Activated CD4-positive, alpha-beta T cell treated with anti-CD3 and anti-CD28 coated beads for 36 hours (primary cell): ENCODE measurements at regions of chr1 and their contacts with region 1.

Region 1: GRCh38 chr1:85276215-85276977 is at the start of gene BCL10:
- DNase-seq: peak; percentile 99
- ATAC-seq: peak; percentile 97
- H3K4me3 Mint-ChIP-seq: peak within 1 kb of the TSS; percentile 84
- H3K27ac Mint-ChIP-seq: peak within 1 kb of the TSS; percentile 94
- H3K4me1 Mint-ChIP-seq: peaks cover 52% of the 10 kb centered on the region
- H3K27me3 Mint-ChIP-seq: peaks cover 4% of the 10 kb centered on the region
- total RNA-seq, gene BCL10: 28.3 to 28.8 TPM

Region 2: DNA sequence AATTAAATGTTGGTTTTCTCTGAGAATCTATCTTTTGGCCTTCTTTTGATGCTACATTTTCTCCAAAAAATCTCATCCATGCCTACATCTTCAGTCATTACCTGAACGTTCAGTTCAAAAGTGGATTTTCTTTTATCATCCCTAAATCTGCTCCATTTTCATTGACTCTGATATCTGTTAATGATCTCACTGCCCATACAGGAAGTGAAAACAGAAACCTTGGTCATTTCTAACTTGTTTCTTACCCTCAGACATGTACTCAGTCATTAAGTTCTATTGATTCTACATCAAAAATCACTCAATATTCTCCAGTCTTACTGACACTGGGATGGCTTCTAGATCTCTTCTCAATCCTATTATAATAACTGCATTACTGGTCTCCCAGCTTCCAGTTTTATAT is 1109.6 kb before region 1 on chr1:
- CTCF ChIA-PET with region 1: no interaction called
- POLR2A ChIA-PET with region 1: no interaction called
- intact Hi-C with region 1: loop called in 1 of 2 experiments (anchors 5 kb)
- DNase-seq: no peak
- ATAC-seq: peak; percentile 71
- H3K4me3 Mint-ChIP-seq: peak overlapping the region; percentile 4
- H3K27ac Mint-ChIP-seq: peak overlapping the region; percentile 52
- H3K4me1 Mint-ChIP-seq: peaks cover 83% of the 10 kb centered on the region
- H3K27me3 Mint-ChIP-seq: no peaks in the 10 kb centered on the region

Region 3: GRCh38 chr1:84959294-84959693 is 317.1 kb before region 1 on chr1:
- CTCF ChIA-PET with region 1: no interaction called
- POLR2A ChIA-PET with region 1: interaction called, 3 read pairs
- intact Hi-C with region 1: loop called in 1 of 2 experiments (anchors 5 kb)
- DNase-seq: peak; percentile 77
- ATAC-seq: peak; percentile 97
- H3K4me3 Mint-ChIP-seq: peak overlapping the region; percentile 7
- H3K27ac Mint-ChIP-seq: peak overlapping the region; percentile 87
- H3K4me1 Mint-ChIP-seq: peaks cover 33% of the 10 kb centered on the region
- H3K27me3 Mint-ChIP-seq: peaks cover 2% of the 10 kb centered on the region

Region 4: GRCh38 chr1:85128341-85128740 is 148.1 kb before region 1 on chr1:
- CTCF ChIA-PET with region 1: no interaction called
- POLR2A ChIA-PET with region 1: no interaction called
- intact Hi-C with region 1: no loop called
- DNase-seq: no peak
- ATAC-seq: no peak
- H3K4me3 Mint-ChIP-seq: no peak overlapping the region
- H3K27ac Mint-ChIP-seq: no peak overlapping the region
- H3K4me1 Mint-ChIP-seq: no peaks in the 10 kb centered on the region
- H3K27me3 Mint-ChIP-seq: no peaks in the 10 kb centered on the region

Region 5: GRCh38 chr1:85200870-85201339 is 75.5 kb before region 1 on chr1 and contains the start of gene SYDE2:
- CTCF ChIA-PET with region 1: interaction called, 3 read pairs
- POLR2A ChIA-PET with region 1: no interaction called
- intact Hi-C with region 1: loop called in 1 of 2 experiments (anchors 1 kb)
- DNase-seq: peak; percentile 79
- ATAC-seq: peak; percentile 76
- H3K4me3 Mint-ChIP-seq: peak within 1 kb of the TSS; percentile 90
- H3K27ac Mint-ChIP-seq: peak within 1 kb of the TSS; percentile 88
- H3K4me1 Mint-ChIP-seq: peaks cover 25% of the 10 kb centered on the region
- H3K27me3 Mint-ChIP-seq: peaks cover 12% of the 10 kb centered on the region
- total RNA-seq, gene SYDE2: 2.9 to 3.3 TPM

Region 6: GRCh38 chr1:85707990-85708828 is 431.8 kb after region 1 on chr1 and contains the start of gene ZNHIT6:
- CTCF ChIA-PET with region 1: no interaction called
- POLR2A ChIA-PET with region 1: no interaction called
- intact Hi-C with region 1: loop called (anchors 1 to 10 kb)
- DNase-seq: peak; percentile 93
- ATAC-seq: peak; percentile 96
- H3K4me3 Mint-ChIP-seq: no peak within 1 kb of the TSS
- H3K27ac Mint-ChIP-seq: no peak within 1 kb of the TSS
- H3K4me1 Mint-ChIP-seq: peaks cover 26% of the 10 kb centered on the region
- H3K27me3 Mint-ChIP-seq: no peaks in the 10 kb centered on the region
- total RNA-seq, gene ZNHIT6: 20.7 to 23.8 TPM